A673 (cell line): ENCODE measurements at regions of chr10 and their contacts with region 1.

Region 1: GRCh38 chr10:33204049-33204448 is 130.4 kb downstream of the NRP1 start:
- DNase-seq: no peak
- H3K4me3 ChIP-seq: no peak overlapping the region
- H3K27ac ChIP-seq: no peak overlapping the region
- H3K4me1 ChIP-seq: peaks cover 21% of the 10 kb centered on the region
- H3K27me3 ChIP-seq: no peaks in the 10 kb centered on the region
- CTCF ChIP-seq: no peak

Region 2: GRCh38 chr10:33132626-33133025 is 71.4 kb before region 1 on chr10:
- CTCF ChIA-PET with region 1: no interaction called
- POLR2A ChIA-PET with region 1: interaction called, 15 read pairs
- intact Hi-C with region 1: no loop called
- DNase-seq: no peak
- H3K4me3 ChIP-seq: no peak overlapping the region
- H3K27ac ChIP-seq: no peak overlapping the region
- H3K4me1 ChIP-seq: no peaks in the 10 kb centered on the region
- H3K27me3 ChIP-seq: no peaks in the 10 kb centered on the region
- CTCF ChIP-seq: peak; percentile 34; the same call in 1 of the 2 replicates

Region 3: GRCh38 chr10:34223658-34224057 is 1019.6 kb after region 1 on chr10:
- CTCF ChIA-PET with region 1: no interaction called
- POLR2A ChIA-PET with region 1: no interaction called
- intact Hi-C with region 1: no loop called
- DNase-seq: no peak
- H3K4me3 ChIP-seq: no peak overlapping the region
- H3K27ac ChIP-seq: no peak overlapping the region
- H3K4me1 ChIP-seq: no peaks in the 10 kb centered on the region
- H3K27me3 ChIP-seq: no peaks in the 10 kb centered on the region
- CTCF ChIP-seq: 0 out of 2 replicates have a peak, but pooled peaks have one; percentile 31